ENCODE measurements at regions of chr18 and their contacts with region 1.

Region 1: DNA sequence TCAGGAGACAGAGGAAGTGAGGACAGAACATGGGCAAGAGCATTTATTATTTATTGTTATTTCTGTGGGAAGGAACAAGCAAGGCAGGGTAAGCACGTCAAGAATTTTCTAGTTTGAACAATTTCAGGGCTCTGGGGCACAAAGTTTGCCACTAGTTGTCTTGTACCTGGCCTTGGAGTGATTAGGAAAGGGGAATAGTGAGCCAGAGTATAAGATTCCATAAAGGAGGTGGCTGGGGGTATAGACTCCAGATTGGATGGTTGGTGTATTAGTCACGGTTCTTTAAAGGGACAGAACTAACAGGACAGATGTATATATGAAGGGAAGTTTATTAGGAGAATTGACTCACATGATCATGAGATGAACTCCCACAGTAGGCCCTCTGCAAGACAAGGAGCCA is 31.7 kb upstream of the PTPRM start:
- DNase-seq: no peak
- ATAC-seq: no peak
- H3K4me3 ChIP-seq: no peak overlapping the region
- H3K27ac ChIP-seq: no peak overlapping the region
- H3K4me1 ChIP-seq: peaks cover 0 to 5% (median 0%) of the 10 kb centered on the region in 9 donors
- H3K27me3 ChIP-seq: no peaks in the 10 kb centered on the region
- CTCF ChIP-seq: no peak

Region 2: DNA sequence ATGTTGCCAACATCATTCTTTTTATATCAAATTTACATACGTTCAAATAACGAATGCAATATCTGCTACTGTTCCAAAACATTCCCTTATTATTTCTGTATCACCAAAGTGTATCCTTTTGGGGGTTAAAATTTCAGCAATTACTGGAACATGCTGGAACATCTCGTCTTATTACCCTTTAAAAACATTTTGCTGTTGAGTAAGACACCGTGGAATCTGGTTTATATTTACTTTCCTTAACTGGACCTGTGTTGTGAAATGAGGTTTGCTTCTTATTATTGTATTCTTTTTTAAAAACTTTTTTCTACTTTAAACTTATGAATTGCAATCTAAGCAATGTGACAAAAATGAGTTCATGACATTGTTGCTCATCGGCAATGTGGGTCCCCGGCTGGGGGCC is 55.6 kb before region 1 on chr18:
- intact Hi-C with region 1: loop called in 1 of 10 experiments (anchors 10 kb)
- DNase-seq: no peak
- ATAC-seq: no peak
- H3K4me3 ChIP-seq: no peak overlapping the region
- H3K27ac ChIP-seq: no peak overlapping the region
- H3K4me1 ChIP-seq: peaks cover 0 to 4% (median 0%) of the 10 kb centered on the region in 9 donors
- H3K27me3 ChIP-seq: no peaks in the 10 kb centered on the region
- CTCF ChIP-seq: no peak